ENCODE measurements at regions of chr5 and their contacts with region 1.

Region 1: DNA sequence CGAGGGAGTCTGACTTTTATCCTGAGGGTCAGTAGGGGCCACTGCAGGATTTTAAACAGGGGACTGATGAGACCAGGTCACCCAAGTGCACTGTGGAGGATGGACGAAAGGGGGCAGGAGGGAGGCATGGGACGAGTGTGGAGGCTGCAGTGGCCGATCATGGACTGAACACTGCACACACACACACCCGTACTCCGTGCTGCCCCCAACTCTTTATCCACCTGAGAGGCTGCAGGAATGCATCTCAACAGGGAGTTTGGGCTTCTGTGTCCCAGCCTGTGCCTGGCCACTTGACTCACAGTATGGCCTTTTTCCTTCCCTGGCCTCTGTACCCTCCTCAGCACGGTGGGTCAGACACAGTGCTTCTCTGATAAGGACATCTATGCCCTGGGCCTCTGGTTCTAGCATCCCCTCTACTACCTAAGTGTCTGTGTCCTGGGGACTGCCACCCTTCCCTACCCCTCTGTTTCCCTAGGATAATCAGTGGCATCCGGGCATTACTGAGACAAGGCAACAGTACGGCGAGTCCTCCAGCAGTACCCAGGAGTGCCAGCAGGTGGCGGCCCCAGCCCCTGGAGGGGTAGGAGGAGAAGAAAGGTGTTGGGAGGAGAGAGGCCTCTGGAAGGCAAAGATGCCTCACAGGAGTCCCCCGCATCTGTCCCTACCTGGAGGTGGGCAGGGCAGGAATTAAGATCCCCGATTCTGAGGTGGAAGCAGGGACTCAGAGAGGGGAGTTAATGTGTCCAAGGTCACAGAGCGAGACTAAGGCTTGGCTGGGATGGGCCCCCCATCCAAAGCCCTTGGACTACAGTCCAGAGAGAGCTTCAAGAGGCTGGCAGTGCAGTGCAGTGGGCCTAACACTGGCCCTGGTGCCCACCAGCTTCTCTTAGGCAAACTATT is 5.1 kb upstream of the CDX1 start:
- DNase-seq: peak; percentile 76 to 91 (median 80)
- H3K4me3 ChIP-seq: no peak overlapping the region
- H3K27ac ChIP-seq: peak overlapping the region in 1 of 5 donors; percentile 85
- H3K4me1 ChIP-seq: peaks cover 1% of the 10 kb centered on the region in 2 donors
- H3K27me3 ChIP-seq: peaks cover 2% of the 10 kb centered on the region
- CTCF ChIP-seq: peak; percentile 87 to 95 (median 91)
- POLR2A ChIP-seq: no peak

Region 2: GRCh38 chr5:149551200-149552037 is 610.1 kb before region 1 on chr5 and contains the start of gene CSNK1A1:
- intact Hi-C with region 1: no loop called
- DNase-seq: peak; percentile 98 to 99 (median 99)
- H3K4me3 ChIP-seq: peak within 1 kb of the TSS; percentile 62 to 98 (median 73)
- H3K27ac ChIP-seq: peak within 1 kb of the TSS; percentile 84 to 100 (median 99)
- H3K4me1 ChIP-seq: peaks cover 14 to 31% of the 10 kb centered on the region in 2 donors
- H3K27me3 ChIP-seq: no peaks in the 10 kb centered on the region
- CTCF ChIP-seq: peak; percentile 76 to 98 (median 87)
- POLR2A ChIP-seq: peak; percentile 82 to 99
- total RNA-seq, gene CSNK1A1: 165 to 301 (median 221) TPM

Region 3: DNA sequence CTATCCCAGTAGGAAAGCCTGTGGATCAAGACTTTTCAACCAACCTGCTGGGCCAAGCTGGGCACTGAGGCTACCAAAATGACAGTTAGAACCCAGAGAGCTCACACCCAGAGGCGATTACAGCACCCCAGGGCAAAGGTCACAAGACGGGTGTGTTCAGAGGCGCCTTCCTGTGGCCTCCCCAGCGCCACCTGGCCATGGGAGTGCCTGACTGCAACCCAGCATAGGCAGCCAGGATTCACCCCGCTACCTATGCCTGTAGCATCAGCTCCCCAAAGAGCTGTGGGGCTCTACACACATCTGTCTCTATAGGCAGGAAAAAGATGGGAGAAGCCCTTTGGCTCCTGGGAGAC is 39.4 kb before region 1 on chr5:
- intact Hi-C with region 1: no loop called
- DNase-seq: no peak
- H3K4me3 ChIP-seq: no peak overlapping the region
- H3K27ac ChIP-seq: no peak overlapping the region
- H3K4me1 ChIP-seq: no peaks in the 10 kb centered on the region
- H3K27me3 ChIP-seq: no peaks in the 10 kb centered on the region
- CTCF ChIP-seq: no peak
- POLR2A ChIP-seq: no peak

Region 4: GRCh38 chr5:150234576-150235499 is 73.3 kb after region 1 on chr5:
- intact Hi-C with region 1: no loop called
- DNase-seq: peak in 1 of 7 donors; percentile 19
- H3K4me3 ChIP-seq: no peak overlapping the region
- H3K27ac ChIP-seq: no peak overlapping the region
- H3K4me1 ChIP-seq: no peaks in the 10 kb centered on the region
- H3K27me3 ChIP-seq: no peaks in the 10 kb centered on the region
- CTCF ChIP-seq: no peak
- POLR2A ChIP-seq: no peak

Region 5: GRCh38 chr5:150340614-150341255 is 179.2 kb after region 1 on chr5:
- intact Hi-C with region 1: loop called in 1 of 2 experiments (anchors 10 kb)
- DNase-seq: no peak
- H3K4me3 ChIP-seq: no peak overlapping the region
- H3K27ac ChIP-seq: no peak overlapping the region
- H3K4me1 ChIP-seq: no peaks in the 10 kb centered on the region
- H3K27me3 ChIP-seq: no peaks in the 10 kb centered on the region
- CTCF ChIP-seq: no peak
- POLR2A ChIP-seq: no peak